Cardiac septum (tissue), 1 donor: ENCODE measurements at regions of chr3 and their contacts with region 1.

Region 1: GRCh38 chr3:50674349-50675178 is at the start of gene DOCK3:
- DNase-seq: no peak
- total RNA-seq, gene DOCK3: 6.1 TPM

Region 2: DNA sequence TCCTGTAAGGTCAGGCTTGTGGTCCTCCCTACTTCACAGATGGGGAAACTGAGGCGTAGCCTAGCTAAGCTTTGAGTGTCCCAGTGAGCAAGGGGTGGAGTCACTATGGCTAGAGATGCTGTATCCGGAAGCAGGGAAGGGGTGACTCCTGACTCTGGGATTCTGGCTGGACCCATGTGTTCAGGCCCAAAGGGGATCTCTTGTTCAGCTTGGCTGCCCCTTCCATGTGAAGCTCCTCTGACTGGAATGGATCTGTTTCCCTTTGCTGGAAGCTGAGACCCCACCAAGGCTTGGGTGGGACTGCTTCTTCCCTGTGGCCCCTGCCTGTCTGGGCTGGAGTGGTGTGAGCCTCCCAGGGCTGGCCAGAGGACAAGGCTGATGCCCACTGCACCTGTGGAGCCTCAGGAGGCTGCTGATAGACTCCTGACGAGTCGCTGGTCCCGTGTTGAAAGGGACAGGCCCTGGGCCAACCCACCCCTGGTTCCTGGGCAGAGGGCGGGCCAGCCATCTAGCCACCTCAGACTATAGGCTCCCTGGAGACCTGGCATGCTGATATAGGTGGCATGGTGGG is 56.6 kb before region 1 on chr3:
- intact Hi-C with region 1: loop called (anchors 1 kb)
- DNase-seq: no peak

Region 3: DNA sequence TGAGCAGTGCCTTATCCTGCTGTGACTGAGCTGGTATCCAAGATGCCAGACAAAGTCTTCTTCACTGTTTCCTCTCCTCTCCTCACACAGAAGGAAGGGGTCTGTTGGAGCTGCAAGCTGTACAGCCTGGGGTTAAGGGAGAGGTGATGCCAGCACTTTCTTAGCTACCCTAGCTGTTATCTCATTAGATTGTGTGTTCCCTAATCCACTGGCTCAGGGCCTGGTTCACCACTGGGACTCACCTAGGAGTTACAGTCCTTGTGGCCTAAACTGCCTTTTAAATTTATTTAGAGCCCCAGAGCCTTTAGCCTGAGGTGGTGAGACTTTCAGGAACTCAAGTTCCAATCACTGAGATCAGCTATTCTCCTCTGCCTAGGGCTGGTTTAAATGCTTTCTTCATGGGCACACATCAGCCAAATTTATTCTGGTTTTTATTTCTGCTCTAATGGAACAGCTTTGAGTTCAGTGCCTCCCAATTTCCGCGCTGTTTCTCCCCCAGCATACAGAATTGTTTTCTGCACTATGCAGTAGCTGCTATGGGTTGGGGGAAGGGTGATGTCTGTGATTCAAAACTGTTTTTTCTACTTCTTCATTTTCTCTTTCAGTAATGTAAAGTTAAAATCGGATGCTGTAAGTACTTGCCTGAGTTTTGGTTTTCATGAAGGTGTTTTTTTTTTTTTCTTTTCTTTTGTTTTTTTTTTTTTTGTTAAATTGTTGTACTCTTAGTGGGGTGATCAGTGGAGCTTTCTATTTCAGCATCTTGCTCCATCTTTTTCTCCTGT is 199.0 kb after region 1 on chr3:
- intact Hi-C with region 1: loop called (anchors 10 kb)
- DNase-seq: no peak